MCF 10A (cell line): ENCODE measurements at regions of chr1 and their contacts with region 1.

Region 1: GRCh38 chr1:52697795-52698674 is at the start of gene COA7:
- DNase-seq: peak; percentile 87
- H3K4me3 Mint-ChIP-seq: peak within 1 kb of the TSS; percentile 93
- H3K27ac Mint-ChIP-seq: peak within 1 kb of the TSS; percentile 91
- H3K4me1 Mint-ChIP-seq: peaks cover 18% of the 10 kb centered on the region
- H3K27me3 Mint-ChIP-seq: no peaks in the 10 kb centered on the region
- CTCF ChIP-seq: no peak
- total RNA-seq, gene COA7: 28.0 and 38.9 TPM in 2 replicates

Region 2: DNA sequence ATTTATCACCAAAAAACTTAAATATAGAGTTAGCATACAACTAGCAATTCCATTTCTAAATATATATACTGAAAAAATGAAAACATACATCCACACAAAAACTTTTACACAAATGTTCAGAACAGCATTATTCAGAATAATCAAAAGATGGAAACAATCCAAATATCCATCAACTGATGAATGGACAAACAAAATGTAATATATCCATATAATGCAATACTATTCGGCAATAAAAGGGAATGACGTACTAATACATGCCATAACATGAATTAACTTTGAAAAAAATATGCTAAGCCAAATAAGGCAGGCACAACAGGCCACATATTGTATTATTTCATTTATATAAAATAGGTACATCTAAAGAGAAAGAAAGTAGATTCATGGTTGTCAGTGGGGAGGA is 179.1 kb before region 1 on chr1:
- CTCF ChIA-PET with region 1: no interaction called
- POLR2A ChIA-PET with region 1: no interaction called
- intact Hi-C with region 1: no loop called
- DNase-seq: no peak
- H3K4me3 Mint-ChIP-seq: no peak overlapping the region
- H3K27ac Mint-ChIP-seq: no peak overlapping the region
- H3K4me1 Mint-ChIP-seq: peaks cover 11% of the 10 kb centered on the region
- H3K27me3 Mint-ChIP-seq: no peaks in the 10 kb centered on the region
- CTCF ChIP-seq: no peak

Region 3: DNA sequence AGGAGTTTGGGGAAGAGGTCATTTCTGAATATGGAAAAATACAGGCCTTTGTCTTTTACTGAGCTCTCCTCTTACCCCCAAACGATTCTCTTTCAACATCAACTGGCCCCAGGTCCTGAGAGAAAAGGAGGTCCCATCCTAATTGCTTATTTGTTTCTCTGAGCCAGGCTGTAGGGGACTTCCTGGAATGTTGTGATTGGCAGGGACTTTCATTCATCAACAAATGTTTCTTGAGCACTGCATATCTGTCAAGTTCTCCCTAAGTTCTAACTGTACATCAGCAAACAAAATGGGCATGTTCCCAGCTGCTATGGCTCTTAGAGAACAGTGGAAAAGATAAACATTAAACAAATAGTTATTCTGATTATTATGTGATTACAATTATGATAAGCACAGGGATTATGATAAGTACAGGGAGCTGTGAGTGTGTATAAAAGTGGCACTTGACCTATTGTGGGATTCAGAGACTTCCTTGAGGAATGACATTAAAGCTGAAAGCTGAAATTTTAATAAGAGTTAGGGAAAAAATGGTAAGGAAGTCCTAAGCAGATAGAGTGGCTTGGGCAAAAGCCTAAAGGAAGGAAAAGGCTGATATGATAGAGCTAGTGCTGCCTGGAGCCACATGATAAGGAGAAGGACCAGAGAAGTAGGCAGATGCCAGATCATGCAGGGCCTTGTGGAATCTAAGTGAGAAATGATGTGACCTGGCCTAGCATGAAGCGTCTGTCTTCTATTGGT is 84.2 kb before region 1 on chr1:
- CTCF ChIA-PET with region 1: no interaction called
- POLR2A ChIA-PET with region 1: no interaction called
- intact Hi-C with region 1: no loop called
- DNase-seq: no peak
- H3K4me3 Mint-ChIP-seq: no peak overlapping the region
- H3K27ac Mint-ChIP-seq: no peak overlapping the region
- H3K4me1 Mint-ChIP-seq: no peaks in the 10 kb centered on the region
- H3K27me3 Mint-ChIP-seq: peaks cover 6% of the 10 kb centered on the region
- CTCF ChIP-seq: no peak

Region 4: GRCh38 chr1:52726265-52727113 is 28.5 kb after region 1 on chr1 and contains the start of gene ZYG11B:
- CTCF ChIA-PET with region 1: interaction called, 6 read pairs
- POLR2A ChIA-PET with region 1: interaction called, 22 read pairs
- intact Hi-C with region 1: no loop called
- DNase-seq: peak; percentile 81
- H3K4me3 Mint-ChIP-seq: peak within 1 kb of the TSS; percentile 97
- H3K27ac Mint-ChIP-seq: peak within 1 kb of the TSS; percentile 96
- H3K4me1 Mint-ChIP-seq: peaks cover 25% of the 10 kb centered on the region
- H3K27me3 Mint-ChIP-seq: no peaks in the 10 kb centered on the region
- CTCF ChIP-seq: no peak
- total RNA-seq, gene ZYG11B: 16.2 and 18.6 TPM in 2 replicates

Region 5: GRCh38 chr1:53043271-53043670 is 345.2 kb after region 1 on chr1:
- CTCF ChIA-PET with region 1: no interaction called
- POLR2A ChIA-PET with region 1: no interaction called
- intact Hi-C with region 1: no loop called
- DNase-seq: no peak
- H3K4me3 Mint-ChIP-seq: no peak overlapping the region
- H3K27ac Mint-ChIP-seq: no peak overlapping the region
- H3K4me1 Mint-ChIP-seq: no peaks in the 10 kb centered on the region
- H3K27me3 Mint-ChIP-seq: no peaks in the 10 kb centered on the region
- CTCF ChIP-seq: no peak